GM12878 (cell line): ENCODE measurements at regions of chr4 and their contacts with region 1.

Region 1: GRCh38 chr4:6200011-6200921 is at the start of gene JAKMIP1:
- DNase-seq: no peak
- ATAC-seq: peak; percentile 62
- H3K4me3 ChIP-seq: peak within 1 kb of the TSS; percentile 98
- H3K27ac ChIP-seq: peak within 1 kb of the TSS; percentile 85
- H3K4me1 ChIP-seq: peaks cover 30% of the 10 kb centered on the region
- H3K27me3 ChIP-seq: no peaks in the 10 kb centered on the region
- CTCF ChIP-seq: no peak
- EP300 ChIP-seq: no peak
- POLR2A ChIP-seq: peak; percentile 69
- RAD21 ChIP-seq: no peak
- polyA plus RNA-seq, gene JAKMIP1: 0.52 to 1.6 TPM

Region 2: GRCh38 chr4:6134612-6135220 is 65.5 kb before region 1 on chr4:
- CTCF ChIA-PET with region 1: interaction called, 11 read pairs
- POLR2A ChIA-PET with region 1: interaction called, 7 read pairs
- RAD21 ChIA-PET with region 1: interaction called, 16 read pairs
- SMC1A ChIA-PET with region 1: interaction called, 6 read pairs
- in situ Hi-C with region 1: no loop called
- intact Hi-C with region 1: no loop called
- DNase-seq: peak; percentile 51
- ATAC-seq: peak; percentile 99
- H3K4me3 ChIP-seq: no peak overlapping the region
- H3K27ac ChIP-seq: no peak overlapping the region
- H3K4me1 ChIP-seq: peaks cover 7% of the 10 kb centered on the region; the same call in 1 of the 2 replicates
- H3K27me3 ChIP-seq: no peaks in the 10 kb centered on the region
- CTCF ChIP-seq: peak; percentile 72 to 96 (median 73)
- EP300 ChIP-seq: no peak
- POLR2A ChIP-seq: no peak
- RAD21 ChIP-seq: peak; percentile 78

Region 3: GRCh38 chr4:6221851-6222760 is 21.8 kb after region 1 on chr4:
- CTCF ChIA-PET with region 1: interaction called, 7 read pairs
- POLR2A ChIA-PET with region 1: interaction called, 6 read pairs
- RAD21 ChIA-PET with region 1: interaction called, 24 read pairs
- SMC1A ChIA-PET with region 1: interaction called, 13 read pairs
- in situ Hi-C with region 1: no loop called
- intact Hi-C with region 1: no loop called
- DNase-seq: no peak
- ATAC-seq: peak; percentile 57
- H3K4me3 ChIP-seq: 0 out of 2 replicates have a peak overlapping the region, but pooled peaks have one; percentile 27
- H3K27ac ChIP-seq: no peak overlapping the region
- H3K4me1 ChIP-seq: peaks cover 16% of the 10 kb centered on the region
- H3K27me3 ChIP-seq: no peaks in the 10 kb centered on the region; a peak in 2 of 4 replicates
- CTCF ChIP-seq: no peak
- EP300 ChIP-seq: no peak
- POLR2A ChIP-seq: no peak
- RAD21 ChIP-seq: no peak

Region 4: DNA sequence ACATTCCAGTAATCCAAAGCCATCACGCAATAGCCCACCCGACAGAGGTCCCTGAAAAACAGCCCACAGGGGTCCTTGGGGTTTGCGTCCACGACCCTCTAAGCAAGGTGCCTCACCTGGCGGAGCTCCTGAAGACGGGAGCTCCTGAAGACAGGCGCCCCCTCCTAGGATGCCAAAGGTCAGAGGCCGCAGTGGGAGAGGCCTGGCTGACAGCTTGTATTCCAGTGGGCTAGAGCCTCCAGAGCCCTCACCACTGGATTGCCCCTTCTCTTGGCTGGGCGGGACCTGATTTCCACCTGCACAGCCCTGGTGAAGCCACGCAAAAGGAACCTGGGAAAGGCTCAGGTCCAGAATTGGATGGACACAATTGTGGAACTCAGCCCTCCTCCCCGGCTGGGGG is 39.7 kb after region 1 on chr4:
- CTCF ChIA-PET with region 1: no interaction called
- POLR2A ChIA-PET with region 1: no interaction called
- RAD21 ChIA-PET with region 1: no interaction called
- SMC1A ChIA-PET with region 1: no interaction called
- in situ Hi-C with region 1: no loop called
- intact Hi-C with region 1: no loop called
- DNase-seq: no peak
- ATAC-seq: no peak
- H3K4me3 ChIP-seq: no peak overlapping the region
- H3K27ac ChIP-seq: no peak overlapping the region
- H3K4me1 ChIP-seq: no peaks in the 10 kb centered on the region
- H3K27me3 ChIP-seq: no peaks in the 10 kb centered on the region; a peak in 2 of 4 replicates
- CTCF ChIP-seq: no peak
- EP300 ChIP-seq: no peak
- POLR2A ChIP-seq: no peak
- RAD21 ChIP-seq: no peak

Region 5: DNA sequence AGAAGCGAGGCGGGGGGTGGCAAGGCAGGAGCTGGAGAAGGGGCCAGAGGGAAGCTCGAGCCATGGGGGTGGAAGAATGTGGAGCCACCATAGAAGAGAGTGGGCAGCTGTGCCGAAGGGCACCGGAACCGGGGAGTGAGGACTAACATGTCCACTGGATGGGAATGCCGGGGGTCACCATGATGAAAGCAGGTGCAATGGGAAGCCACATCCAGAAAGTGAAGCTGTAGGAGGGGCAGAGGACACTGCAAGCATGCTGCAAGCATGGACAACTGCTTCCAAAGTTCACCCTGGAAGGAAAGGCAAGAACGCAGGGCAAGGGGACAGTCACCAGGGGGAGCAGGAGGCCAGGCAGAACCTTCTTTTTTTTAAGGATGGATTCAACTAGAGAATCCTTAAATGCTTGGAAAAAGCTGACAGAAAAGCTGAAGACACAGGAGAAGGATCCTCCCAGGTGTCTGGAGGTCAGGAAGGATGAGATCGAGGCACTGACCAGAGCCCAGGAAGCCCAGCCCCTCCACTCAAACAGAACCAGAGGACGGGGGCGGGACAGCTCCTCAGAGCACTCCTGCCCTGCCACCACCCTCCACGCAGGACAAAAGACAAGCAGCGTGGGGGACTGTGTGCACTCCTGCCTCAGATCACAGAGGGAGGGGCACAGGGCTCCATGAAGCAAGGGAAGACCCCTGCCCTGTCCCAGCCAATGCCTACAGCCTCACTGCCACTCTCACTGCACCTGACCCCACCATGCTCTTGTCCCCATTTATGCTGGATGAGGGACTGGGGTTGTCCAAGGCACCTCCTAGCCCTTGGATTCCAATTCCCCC is 1570.2 kb after region 1 on chr4:
- CTCF ChIA-PET with region 1: no interaction called
- POLR2A ChIA-PET with region 1: no interaction called
- RAD21 ChIA-PET with region 1: no interaction called
- SMC1A ChIA-PET with region 1: no interaction called
- in situ Hi-C with region 1: loop called (anchors 10 kb)
- intact Hi-C with region 1: no loop called
- DNase-seq: no peak
- ATAC-seq: no peak
- H3K4me3 ChIP-seq: no peak overlapping the region
- H3K27ac ChIP-seq: no peak overlapping the region
- H3K4me1 ChIP-seq: peaks cover 23% of the 10 kb centered on the region
- H3K27me3 ChIP-seq: peaks cover 0 to 3% of the 10 kb centered on the region in 2 experiments; a peak in 2 of 4 replicates
- CTCF ChIP-seq: peak; percentile 37 to 63 (median 61); a peak in 5 of 6 replicates
- EP300 ChIP-seq: no peak
- POLR2A ChIP-seq: no peak
- RAD21 ChIP-seq: peak; percentile 79